ENCODE measurements at regions of chr16 and their contacts with region 1.

Region 1: DNA sequence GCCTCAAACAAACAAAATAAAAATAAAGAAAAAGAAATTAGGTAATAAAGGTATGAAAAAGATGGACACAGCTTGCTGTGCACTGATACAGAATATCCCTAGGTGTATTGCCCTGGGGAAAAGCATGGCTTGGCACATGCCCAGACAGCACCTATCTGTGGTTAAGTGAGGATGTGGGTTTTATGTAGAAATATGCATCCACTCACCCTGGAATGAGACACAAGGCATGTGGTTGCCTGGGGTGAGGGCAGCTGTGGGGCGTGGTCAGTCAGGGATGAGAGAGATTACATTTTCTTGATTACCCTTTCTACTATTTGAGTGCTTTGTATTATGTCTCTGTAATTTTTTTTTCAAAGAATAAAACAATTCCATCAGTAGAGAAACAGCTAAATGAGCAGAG is 6.9 kb downstream of the PLLP start:
- DNase-seq: peak; percentile 77
- H3K4me3 Mint-ChIP-seq: peak overlapping the region; percentile 1
- H3K27ac Mint-ChIP-seq: peak overlapping the region; percentile 18
- H3K4me1 Mint-ChIP-seq: peaks cover 68% of the 10 kb centered on the region
- H3K27me3 Mint-ChIP-seq: no peaks in the 10 kb centered on the region
- CTCF ChIP-seq: no peak

Region 2: DNA sequence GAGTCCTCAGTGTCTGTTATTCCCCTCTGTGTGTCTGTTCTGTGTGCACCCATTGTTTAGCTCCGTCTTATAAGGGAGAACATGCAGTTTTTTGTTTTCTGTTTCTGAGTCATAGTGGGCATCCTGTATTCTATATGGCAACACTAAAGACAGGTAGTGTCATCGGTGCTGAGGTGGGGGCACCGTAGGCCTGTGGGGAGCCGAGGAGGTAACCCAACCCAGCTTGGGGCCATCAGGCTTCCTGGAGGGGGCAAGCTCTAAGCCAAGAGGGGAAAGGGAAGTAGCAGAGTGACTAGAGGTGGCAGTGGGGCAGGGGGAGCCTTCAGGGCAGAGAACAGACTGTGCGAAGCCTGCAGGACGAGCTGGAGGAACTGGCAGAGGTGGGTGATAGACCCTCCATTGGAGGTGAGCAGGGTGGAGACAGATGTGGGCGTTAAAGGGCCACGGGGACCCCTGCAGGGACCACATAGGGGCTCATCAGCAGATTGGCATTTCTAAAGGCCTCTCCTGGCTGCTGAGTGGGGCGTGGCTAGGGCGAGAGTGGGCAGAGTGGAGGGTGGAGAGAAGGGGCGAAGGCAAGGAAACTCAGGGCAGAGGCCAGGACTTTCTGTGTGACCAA is 148.7 kb before region 1 on chr16:
- CTCF ChIA-PET with region 1: no interaction called
- intact Hi-C with region 1: no loop called
- DNase-seq: no peak
- H3K4me3 Mint-ChIP-seq: no peak overlapping the region
- H3K27ac Mint-ChIP-seq: no peak overlapping the region
- H3K4me1 Mint-ChIP-seq: no peaks in the 10 kb centered on the region
- H3K27me3 Mint-ChIP-seq: no peaks in the 10 kb centered on the region
- CTCF ChIP-seq: no peak

Region 3: GRCh38 chr16:57194512-57194911 is 83.1 kb before region 1 on chr16:
- CTCF ChIA-PET with region 1: no interaction called
- intact Hi-C with region 1: loop called (anchors 2 kb)
- DNase-seq: peak; percentile 11
- H3K4me3 Mint-ChIP-seq: no peak overlapping the region
- H3K27ac Mint-ChIP-seq: peak overlapping the region; percentile 16
- H3K4me1 Mint-ChIP-seq: peaks cover 47% of the 10 kb centered on the region
- H3K27me3 Mint-ChIP-seq: no peaks in the 10 kb centered on the region
- CTCF ChIP-seq: no peak

Region 4: DNA sequence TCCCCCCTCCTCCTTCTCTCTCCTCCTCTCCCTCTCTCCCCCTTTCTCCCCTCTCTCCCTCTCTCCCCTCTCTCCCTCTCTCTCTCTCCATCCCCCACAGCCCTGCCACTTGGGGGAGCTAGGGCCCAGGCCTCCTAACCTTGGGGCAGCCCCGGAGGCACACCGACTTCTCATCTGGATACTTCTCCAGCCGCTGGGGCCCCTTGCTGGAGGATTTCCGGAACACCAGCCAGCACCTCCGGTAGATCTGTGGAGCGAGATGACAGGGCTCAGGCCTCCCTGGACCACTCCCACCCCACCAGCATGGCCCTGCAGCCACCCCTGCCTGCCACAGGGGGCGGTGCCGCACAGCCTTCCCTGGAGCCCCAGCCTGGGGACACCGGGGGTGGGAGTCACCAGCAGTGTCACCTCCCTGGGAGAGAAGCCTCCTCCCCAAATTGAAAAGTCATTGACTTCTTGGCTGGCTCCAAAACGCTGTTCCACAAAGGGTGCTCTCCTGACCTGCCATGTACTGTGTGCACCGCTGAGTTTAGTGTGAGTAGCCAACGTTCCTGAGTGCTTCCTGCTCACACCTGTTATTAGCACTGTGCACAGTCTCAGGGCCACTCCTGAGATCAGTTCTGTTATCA is 198.2 kb after region 1 on chr16:
- CTCF ChIA-PET with region 1: no interaction called
- intact Hi-C with region 1: no loop called
- DNase-seq: peak; percentile 43
- H3K4me3 Mint-ChIP-seq: no peak overlapping the region
- H3K27ac Mint-ChIP-seq: no peak overlapping the region
- H3K4me1 Mint-ChIP-seq: peaks cover 35% of the 10 kb centered on the region
- H3K27me3 Mint-ChIP-seq: no peaks in the 10 kb centered on the region
- CTCF ChIP-seq: peak; percentile 26

Region 5: DNA sequence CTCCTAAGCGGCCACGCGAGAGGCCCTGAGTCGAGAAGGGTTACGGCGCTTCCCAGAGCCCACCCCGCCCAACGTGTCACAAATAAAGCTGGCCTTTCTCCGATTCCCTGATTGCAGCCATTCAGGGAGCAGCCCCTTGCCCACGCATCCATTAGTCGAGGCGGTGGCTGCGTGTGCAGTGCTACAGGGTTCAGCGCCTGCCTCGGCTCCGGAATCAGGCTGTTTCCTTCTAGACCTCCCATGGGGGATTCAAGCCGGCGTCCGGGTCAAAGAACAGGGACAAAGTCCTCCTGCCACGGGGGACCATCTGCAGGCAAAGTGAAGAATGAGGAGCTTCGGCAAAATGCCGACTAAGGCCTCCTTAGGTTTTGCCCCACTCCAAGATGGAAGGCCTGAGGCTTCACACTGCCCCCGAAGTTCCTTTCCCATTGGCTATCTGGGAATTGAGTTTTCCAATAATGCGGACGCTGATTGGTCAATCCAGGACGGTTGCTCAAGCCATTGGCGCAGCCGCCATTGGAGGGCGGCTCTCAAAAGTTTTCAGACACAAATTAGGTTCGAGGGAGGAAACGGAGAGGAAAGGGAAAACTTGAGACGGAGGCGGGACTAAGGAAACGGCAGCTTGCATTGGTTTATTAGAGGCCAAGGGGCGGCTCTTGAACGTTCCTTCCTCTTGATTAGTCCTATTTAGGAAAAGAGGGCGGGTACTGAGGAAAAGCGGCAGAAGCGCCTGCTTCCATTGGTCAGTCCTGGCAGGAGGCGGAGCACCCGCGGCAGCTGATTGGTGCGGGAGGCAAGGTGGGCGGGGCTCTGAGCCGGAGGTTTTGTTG is 457.6 kb after region 1 on chr16:
- CTCF ChIA-PET with region 1: no interaction called
- intact Hi-C with region 1: no loop called
- DNase-seq: peak; percentile 99
- H3K4me3 Mint-ChIP-seq: peak overlapping the region; percentile 89
- H3K27ac Mint-ChIP-seq: peak overlapping the region; percentile 88
- H3K4me1 Mint-ChIP-seq: peaks cover 13% of the 10 kb centered on the region
- H3K27me3 Mint-ChIP-seq: peaks cover 19% of the 10 kb centered on the region
- CTCF ChIP-seq: no peak